ENCODE measurements at regions of chr20 and their contacts with region 1.

Region 1: DNA sequence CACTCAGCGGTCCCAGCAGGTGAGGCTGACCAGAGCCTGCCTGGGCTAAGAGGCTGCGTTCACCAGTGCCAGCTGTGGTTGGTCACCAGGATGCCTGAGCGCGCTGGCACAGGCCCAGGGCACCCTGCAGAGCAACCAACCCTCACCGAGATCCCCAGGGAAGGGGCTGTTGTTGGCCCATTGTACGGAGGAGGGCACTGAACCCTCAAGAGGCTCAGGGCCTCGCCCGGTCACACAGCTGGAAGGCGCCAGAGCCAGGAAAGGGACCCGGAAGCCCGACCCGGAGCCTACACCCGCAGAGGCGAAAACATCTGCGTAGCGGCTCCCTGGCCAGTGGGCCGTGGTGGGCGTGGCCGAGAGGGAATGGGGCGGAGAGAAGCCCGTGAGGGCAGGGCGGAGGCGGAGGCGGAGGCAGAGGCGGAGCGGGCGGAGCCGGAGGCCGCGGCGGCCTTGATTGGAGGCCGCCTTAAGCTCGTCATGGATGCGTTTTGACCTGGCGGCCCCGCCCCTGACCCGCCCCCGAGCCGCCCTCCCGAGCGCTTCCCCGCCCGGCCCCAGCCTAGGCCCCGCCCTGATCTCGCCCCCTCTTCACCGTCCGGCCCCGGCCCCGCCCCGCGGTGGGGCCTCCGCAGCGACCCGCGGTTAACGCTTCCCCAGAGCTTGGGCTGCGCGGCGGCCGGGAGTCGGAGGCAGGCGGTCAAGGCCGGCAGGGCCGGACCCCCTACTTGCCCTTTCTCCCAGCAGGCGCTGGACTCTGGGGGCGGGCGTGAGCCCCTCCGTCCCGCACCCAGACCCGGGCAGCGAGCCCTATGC is 2.2 kb upstream of the MRGBP start:
- DNase-seq: peak; percentile 96
- ATAC-seq: peak; percentile 79
- H3K4me3 Mint-ChIP-seq: peak overlapping the region; percentile 78
- H3K27ac Mint-ChIP-seq: peak overlapping the region; percentile 90
- H3K4me1 Mint-ChIP-seq: peaks cover 48% of the 10 kb centered on the region
- H3K27me3 Mint-ChIP-seq: no peaks in the 10 kb centered on the region

Region 2: GRCh38 chr20:62409931-62410745 is 384.0 kb before region 1 on chr20:
- CTCF ChIA-PET with region 1: interaction called, 15 read pairs
- POLR2A ChIA-PET with region 1: no interaction called
- DNase-seq: peak; percentile 54
- ATAC-seq: no peak
- H3K4me3 Mint-ChIP-seq: no peak overlapping the region
- H3K27ac Mint-ChIP-seq: no peak overlapping the region
- H3K4me1 Mint-ChIP-seq: peaks cover 24% of the 10 kb centered on the region
- H3K27me3 Mint-ChIP-seq: no peaks in the 10 kb centered on the region

Region 3: DNA sequence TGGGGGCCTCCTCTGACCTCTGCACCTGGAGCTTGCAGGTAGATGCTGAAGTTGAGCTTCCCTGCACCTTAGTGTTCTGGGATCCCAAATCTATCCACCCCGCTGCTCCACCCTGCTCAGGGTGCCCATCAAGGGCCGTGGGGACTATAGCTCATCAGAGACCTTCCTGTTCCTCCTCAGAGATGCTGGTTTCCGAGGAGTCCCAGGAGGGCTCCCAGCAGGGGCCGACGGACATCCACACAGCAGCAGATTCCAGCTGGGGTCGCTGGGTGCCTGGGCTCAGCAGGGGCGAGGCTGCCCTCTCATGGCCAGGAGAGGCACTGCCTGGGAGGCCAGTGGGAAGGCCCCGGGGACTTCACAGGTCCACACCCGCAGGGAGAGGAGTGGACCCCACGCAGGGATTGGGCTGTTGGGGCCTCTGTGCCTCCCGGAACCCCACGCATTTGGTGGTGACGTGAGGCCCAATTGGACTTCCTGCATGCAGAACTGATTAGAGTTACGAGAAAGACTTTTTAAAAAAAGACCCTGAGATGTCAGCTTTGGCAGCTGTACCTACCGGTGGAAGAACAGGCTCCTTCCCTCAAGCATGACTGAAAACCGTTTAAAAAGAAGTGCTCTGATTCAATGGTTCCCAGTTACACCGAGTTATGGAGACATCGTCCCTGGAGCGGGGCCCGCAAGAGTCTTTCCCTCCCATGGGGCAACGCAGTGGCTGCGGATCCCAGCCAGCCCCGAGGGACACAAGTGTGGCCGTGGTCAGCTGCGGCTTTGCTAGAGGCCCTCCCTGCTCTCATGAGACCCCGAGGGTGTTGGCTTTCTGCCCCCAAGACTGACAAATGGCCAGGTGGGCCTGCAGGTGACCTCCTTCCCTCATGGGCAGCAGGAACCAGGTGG is 177.1 kb before region 1 on chr20:
- CTCF ChIA-PET with region 1: interaction called, 18 read pairs
- POLR2A ChIA-PET with region 1: interaction called, 3 read pairs
- DNase-seq: peak; percentile 81
- ATAC-seq: peak; percentile 73
- H3K4me3 Mint-ChIP-seq: peak overlapping the region; percentile 63
- H3K27ac Mint-ChIP-seq: peak overlapping the region; percentile 98
- H3K4me1 Mint-ChIP-seq: peaks cover 44% of the 10 kb centered on the region
- H3K27me3 Mint-ChIP-seq: peaks cover 15% of the 10 kb centered on the region

Region 4: DNA sequence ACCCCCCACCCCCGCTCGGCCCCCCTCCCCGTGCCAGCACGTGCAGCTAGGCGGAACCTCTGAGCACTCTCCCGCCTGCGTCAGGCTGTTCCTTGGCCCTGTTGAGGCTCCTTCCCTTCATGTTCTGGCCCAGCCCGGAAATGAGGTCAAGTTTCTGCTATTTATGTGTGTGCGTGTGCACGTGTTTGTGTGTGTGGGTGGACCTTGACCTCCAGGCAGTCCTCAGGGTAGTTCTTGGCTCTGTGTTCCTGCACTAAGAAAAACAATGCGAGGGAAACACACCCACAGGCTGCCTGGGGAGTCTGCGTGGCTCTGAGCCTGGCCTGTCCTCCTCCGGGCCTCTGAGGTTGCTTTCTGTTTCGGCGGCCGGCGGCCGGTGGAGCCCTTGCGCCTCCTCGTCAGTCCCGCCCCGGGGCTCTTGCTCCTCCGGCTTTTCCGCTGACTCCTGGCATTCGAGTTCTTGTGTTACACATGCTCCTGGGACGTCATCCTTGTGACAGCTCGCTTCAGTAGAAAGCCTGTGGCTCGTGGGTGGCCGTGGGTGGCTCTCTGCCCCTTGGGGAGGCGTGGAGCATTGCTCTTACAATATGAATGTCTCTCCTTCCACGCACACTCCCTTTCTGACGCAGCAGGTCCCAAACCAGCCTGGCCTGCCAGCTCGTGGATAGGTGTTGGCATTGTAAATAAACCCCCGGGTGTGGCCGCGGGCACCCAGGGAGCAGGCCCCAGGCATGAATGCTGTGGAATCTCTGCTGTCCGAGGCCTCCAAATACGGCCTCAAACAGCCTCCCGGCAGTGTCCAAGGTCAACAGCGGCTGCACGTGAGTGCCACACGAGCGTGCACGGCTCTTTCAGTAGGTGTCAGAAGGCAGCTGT is 141.8 kb before region 1 on chr20:
- CTCF ChIA-PET with region 1: interaction called, 24 read pairs
- POLR2A ChIA-PET with region 1: interaction called, 7 read pairs
- DNase-seq: peak; percentile 84
- ATAC-seq: peak; percentile 63
- H3K4me3 Mint-ChIP-seq: peak overlapping the region; percentile 75
- H3K27ac Mint-ChIP-seq: peak overlapping the region; percentile 96
- H3K4me1 Mint-ChIP-seq: peaks cover 67% of the 10 kb centered on the region
- H3K27me3 Mint-ChIP-seq: no peaks in the 10 kb centered on the region

Region 5: DNA sequence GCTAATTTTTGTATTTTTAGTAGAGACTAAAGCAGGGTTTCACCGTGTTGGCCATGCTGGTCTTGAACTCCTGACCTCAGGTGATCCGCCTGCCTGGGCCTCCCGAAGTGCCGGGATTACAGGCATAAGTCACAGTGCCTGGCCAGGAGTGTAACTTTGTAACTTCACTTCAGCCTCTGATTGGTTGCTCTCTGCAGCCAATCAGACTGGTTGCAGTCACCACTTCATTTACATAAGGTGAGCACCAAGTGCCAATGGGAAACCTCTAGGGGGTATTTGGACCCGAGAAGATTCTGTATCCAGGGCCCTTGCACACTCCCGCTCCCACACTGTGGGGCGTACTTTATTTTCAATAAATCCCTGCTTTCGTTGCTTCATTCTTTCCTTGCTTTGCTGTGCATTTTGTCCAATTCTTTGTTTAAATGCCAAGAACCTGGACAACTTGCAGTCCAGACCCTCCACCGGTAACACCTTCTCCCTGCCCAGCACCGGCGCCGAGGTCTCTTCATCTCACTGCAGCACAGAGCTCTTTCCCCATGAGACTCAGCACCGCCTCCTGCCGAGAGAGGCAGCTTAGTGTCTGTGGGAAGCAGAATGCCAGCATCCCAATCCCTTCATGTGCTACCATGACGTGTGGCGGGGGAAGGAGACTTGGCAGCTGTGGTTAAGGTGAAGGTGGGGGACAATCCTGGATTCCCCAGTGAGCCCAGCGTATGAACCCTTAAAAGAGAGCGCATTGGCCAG is 11.8 kb before region 1 on chr20:
- CTCF ChIA-PET with region 1: interaction called, 10 read pairs
- POLR2A ChIA-PET with region 1: interaction called, 7 read pairs
- DNase-seq: no peak
- ATAC-seq: no peak
- H3K4me3 Mint-ChIP-seq: no peak overlapping the region
- H3K27ac Mint-ChIP-seq: no peak overlapping the region
- H3K4me1 Mint-ChIP-seq: peaks cover 17% of the 10 kb centered on the region
- H3K27me3 Mint-ChIP-seq: no peaks in the 10 kb centered on the region

Region 6: GRCh38 chr20:62832212-62832922 is 38.2 kb after region 1 on chr20:
- CTCF ChIA-PET with region 1: no interaction called
- POLR2A ChIA-PET with region 1: no interaction called
- DNase-seq: no peak
- ATAC-seq: peak; percentile 50
- H3K4me3 Mint-ChIP-seq: no peak overlapping the region
- H3K27ac Mint-ChIP-seq: no peak overlapping the region
- H3K4me1 Mint-ChIP-seq: no peaks in the 10 kb centered on the region
- H3K27me3 Mint-ChIP-seq: no peaks in the 10 kb centered on the region

Region 7: GRCh38 chr20:62887147-62887859 is 93.2 kb after region 1 on chr20:
- CTCF ChIA-PET with region 1: no interaction called
- POLR2A ChIA-PET with region 1: no interaction called
- DNase-seq: peak; percentile 53
- ATAC-seq: peak; percentile 55
- H3K4me3 Mint-ChIP-seq: no peak overlapping the region
- H3K27ac Mint-ChIP-seq: peak overlapping the region; percentile 39
- H3K4me1 Mint-ChIP-seq: peaks cover 29% of the 10 kb centered on the region
- H3K27me3 Mint-ChIP-seq: no peaks in the 10 kb centered on the region

Measured in activated CD8-positive, alpha-beta T cell treated with anti-CD3 and anti-CD28 coated beads, Interleukin-2, amount 10 ng/mL, durations not matched to agents 7 days and 5 days (primary cell).